SK-N-SH (cell line): ENCODE measurements at regions of chr6 and their contacts with region 1.

Region 1: DNA sequence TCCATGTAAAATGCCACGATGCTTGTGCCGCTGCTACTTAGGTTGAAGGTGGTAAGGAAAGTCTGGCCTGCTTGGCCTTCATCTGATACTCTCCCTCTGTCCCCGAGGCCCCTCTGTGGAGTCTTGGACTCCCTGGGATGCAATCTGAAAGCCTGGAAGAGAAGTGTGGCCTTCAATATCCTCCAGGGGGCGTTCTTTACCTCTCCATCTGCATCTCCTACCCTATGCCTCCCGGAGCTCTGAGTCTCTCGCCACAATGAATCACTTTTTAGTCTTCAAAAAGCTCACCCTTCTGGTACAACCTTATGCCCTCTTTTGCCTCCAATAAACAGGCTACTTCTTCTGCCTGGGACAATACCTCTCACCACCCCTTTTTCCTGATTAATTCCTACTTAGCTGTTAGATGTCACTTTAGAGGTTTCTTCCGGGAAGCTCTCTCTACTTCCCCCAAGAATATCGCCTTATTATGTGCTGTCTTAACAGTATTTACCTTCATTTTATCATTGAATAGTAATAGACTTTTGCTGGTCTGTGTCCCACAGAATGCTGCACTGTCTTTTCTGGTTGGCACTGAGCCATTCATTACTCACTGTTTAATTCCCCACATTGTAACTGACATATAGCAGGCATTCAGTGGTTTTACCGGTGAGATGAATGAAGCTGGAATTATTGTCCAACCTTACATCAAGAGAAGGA is 13.9 kb upstream of the ATG5 start:
- DNase-seq: peak; percentile 75
- H3K4me3 ChIP-seq: peak overlapping the region; percentile 16 to 27; a peak in 3 of 4 replicates
- H3K27ac ChIP-seq: peak overlapping the region in 1 of 2 experiments; percentile 35; a peak in 1 of 4 replicates
- H3K4me1 ChIP-seq: peaks cover 0 to 2% of the 10 kb centered on the region in 2 experiments; a peak in 2 of 4 replicates
- H3K27me3 ChIP-seq: no peaks in the 10 kb centered on the region
- CTCF ChIP-seq: peak; percentile 90
- EP300 ChIP-seq: no peak
- RAD21 ChIP-seq: peak; percentile 75

Region 2: DNA sequence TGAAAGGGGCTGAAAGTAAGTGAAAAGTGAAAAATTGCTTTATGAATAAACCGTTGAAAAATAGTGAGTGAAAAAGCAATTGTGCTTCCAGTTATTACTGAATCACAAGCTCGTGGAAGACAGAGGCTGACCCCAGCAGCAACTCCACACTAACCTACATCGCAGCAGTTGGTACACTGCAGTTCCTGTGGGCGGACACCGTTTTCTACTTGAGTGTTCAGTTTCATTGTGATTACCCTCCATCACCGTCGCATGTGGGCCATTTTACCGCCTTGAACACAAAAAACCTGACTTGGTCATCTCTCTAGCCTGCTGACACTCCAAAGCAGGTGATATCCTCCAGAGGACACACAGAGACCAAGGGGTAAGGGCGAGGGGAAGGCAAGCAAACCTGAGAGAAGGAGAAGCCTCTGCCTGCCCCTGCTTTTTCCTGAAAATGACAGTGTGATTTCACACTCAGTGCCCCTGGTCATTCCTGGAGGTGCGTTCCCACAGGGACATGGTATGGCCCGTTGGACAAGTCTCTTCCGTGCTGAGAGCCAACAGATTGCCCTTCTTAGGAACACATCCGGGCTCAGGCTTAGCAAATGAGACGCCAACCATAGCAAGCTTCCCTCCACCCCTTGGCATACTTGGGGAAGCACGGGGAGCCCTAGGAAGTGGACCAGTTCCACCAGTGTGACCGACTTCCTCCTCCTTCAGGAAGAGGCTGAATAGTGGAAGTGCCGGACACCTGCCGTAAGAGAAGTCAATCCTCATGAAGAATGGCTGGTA is 224.8 kb before region 1 on chr6:
- CTCF ChIA-PET with region 1: no interaction called
- POLR2A ChIA-PET with region 1: no interaction called
- DNase-seq: no peak
- H3K4me3 ChIP-seq: no peak overlapping the region
- H3K27ac ChIP-seq: no peak overlapping the region
- H3K4me1 ChIP-seq: peaks cover 0 to 19% of the 10 kb centered on the region in 2 experiments; a peak in 2 of 4 replicates
- H3K27me3 ChIP-seq: no peaks in the 10 kb centered on the region
- CTCF ChIP-seq: no peak
- EP300 ChIP-seq: no peak
- RAD21 ChIP-seq: no peak

Region 3: GRCh38 chr6:106325336-106326178 is 13.9 kb before region 1 on chr6 and contains the start of gene ATG5:
- CTCF ChIA-PET with region 1: interaction called, 14 read pairs
- POLR2A ChIA-PET with region 1: interaction called, 5 read pairs
- DNase-seq: peak; percentile 98
- H3K4me3 ChIP-seq: peak within 1 kb of the TSS; percentile 93 to 94
- H3K27ac ChIP-seq: peak within 1 kb of the TSS; percentile 92 to 94
- H3K4me1 ChIP-seq: peaks cover 0 to 9% of the 10 kb centered on the region in 2 experiments; a peak in 2 of 4 replicates
- H3K27me3 ChIP-seq: no peaks in the 10 kb centered on the region
- CTCF ChIP-seq: no peak
- EP300 ChIP-seq: peak in 1 of 2 experiments; percentile 9; a peak in 1 of 4 replicates
- RAD21 ChIP-seq: no peak
- polyA plus RNA-seq, gene ATG5: 15.5 and 16.7 TPM in 2 replicates

Region 4: DNA sequence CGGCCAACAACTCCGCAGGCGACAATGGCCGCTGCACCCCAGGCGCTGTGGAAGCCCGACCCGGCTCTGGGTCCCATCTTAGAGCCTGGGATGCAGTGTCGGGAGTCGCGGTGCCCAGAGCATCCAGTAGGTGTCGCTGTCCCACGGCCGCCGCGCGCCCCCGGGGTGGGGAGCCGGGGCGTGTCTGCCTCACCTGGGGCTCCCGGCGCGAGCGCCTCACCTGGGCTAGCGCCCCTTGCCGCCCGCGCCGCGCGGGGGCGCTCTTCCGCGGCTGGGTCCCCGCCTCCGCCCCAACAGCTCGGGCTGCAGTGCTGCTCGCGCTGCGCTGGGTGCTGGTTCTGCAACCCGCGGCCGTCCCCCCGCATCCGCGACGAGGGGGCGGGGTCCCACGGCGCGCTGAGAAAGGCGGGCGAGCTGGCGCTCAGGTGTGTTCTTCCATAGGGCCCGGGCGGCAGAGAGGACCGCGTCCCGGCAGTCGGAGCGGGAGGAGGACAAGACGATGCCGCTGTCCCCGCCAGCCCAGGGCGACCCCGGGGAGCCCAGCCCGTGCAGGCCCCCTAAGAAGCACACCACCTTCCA is 21.0 kb after region 1 on chr6 and contains the start of gene CRYBG1:
- CTCF ChIA-PET with region 1: interaction called, 16 read pairs
- POLR2A ChIA-PET with region 1: no interaction called
- DNase-seq: peak; percentile 92
- H3K4me3 ChIP-seq: peak within 1 kb of the TSS; percentile 54 to 65
- H3K27ac ChIP-seq: no peak within 1 kb of the TSS
- H3K4me1 ChIP-seq: peaks cover 0 to 12% of the 10 kb centered on the region in 2 experiments; a peak in 1 of 4 replicates
- H3K27me3 ChIP-seq: peaks cover 21% of the 10 kb centered on the region; the same call in 1 of the 2 replicates
- CTCF ChIP-seq: peak; percentile 88
- EP300 ChIP-seq: no peak
- RAD21 ChIP-seq: peak; percentile 22; the same call in 1 of the 2 replicates
- polyA plus RNA-seq, gene CRYBG1: 13.8 and 14.9 TPM in 2 replicates

Region 5: GRCh38 chr6:106372838-106373501 is 33.5 kb after region 1 on chr6:
- CTCF ChIA-PET with region 1: interaction called, 12 read pairs
- POLR2A ChIA-PET with region 1: no interaction called
- DNase-seq: no peak
- H3K4me3 ChIP-seq: no peak overlapping the region
- H3K27ac ChIP-seq: no peak overlapping the region
- H3K4me1 ChIP-seq: peaks cover 2 to 3% of the 10 kb centered on the region in 2 experiments; a peak in 2 of 4 replicates
- H3K27me3 ChIP-seq: no peaks in the 10 kb centered on the region
- CTCF ChIP-seq: no peak
- EP300 ChIP-seq: no peak
- RAD21 ChIP-seq: no peak

Region 6: GRCh38 chr6:106560996-106561685 is 221.7 kb after region 1 on chr6:
- CTCF ChIA-PET with region 1: interaction called, 19 read pairs
- POLR2A ChIA-PET with region 1: no interaction called
- DNase-seq: no peak
- H3K4me3 ChIP-seq: no peak overlapping the region
- H3K27ac ChIP-seq: peak overlapping the region in 1 of 2 experiments; percentile 52; a peak in 1 of 4 replicates
- H3K4me1 ChIP-seq: peaks cover 0 to 5% of the 10 kb centered on the region in 2 experiments; a peak in 1 of 4 replicates
- H3K27me3 ChIP-seq: no peaks in the 10 kb centered on the region
- CTCF ChIP-seq: no peak
- EP300 ChIP-seq: no peak
- RAD21 ChIP-seq: no peak

Region 7: DNA sequence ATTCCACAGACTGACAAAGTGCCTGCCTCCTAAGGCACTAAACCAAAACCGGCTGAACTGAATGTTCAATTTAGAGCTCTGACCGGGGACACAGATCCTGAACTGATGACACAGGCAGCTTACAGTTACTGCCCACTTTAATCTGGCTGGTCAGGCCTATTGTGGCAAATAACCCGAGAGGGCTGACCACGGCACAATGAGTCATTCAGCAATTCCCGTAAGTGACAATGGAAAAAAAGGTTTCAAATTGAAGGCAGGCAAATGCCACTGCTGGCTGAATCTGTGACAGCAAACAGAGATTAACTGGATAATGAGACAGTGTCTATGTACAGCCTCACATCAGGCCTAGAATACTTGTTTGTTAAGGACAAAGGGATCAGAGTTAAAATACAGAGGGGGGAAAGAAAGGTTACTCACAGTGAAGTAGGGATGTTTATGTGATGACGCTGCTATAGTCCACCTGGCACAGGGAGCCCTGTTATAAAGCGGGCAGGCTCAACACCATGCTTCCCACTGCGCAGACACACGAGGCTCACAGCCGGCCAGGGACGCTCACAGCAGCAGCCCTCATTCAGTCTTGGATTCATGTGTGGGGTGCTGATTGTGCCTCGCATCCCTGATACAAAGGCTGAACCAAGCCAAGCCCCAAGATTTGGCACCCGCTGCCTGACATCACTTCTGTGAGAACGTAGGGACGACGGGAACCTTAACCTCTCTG is 235.4 kb after region 1 on chr6:
- CTCF ChIA-PET with region 1: interaction called, 17 read pairs
- POLR2A ChIA-PET with region 1: no interaction called
- DNase-seq: no peak
- H3K4me3 ChIP-seq: no peak overlapping the region
- H3K27ac ChIP-seq: peak overlapping the region; percentile 14 to 35; a peak in 2 of 4 replicates
- H3K4me1 ChIP-seq: no peaks in the 10 kb centered on the region
- H3K27me3 ChIP-seq: no peaks in the 10 kb centered on the region
- CTCF ChIP-seq: no peak
- EP300 ChIP-seq: peak in 1 of 2 experiments; percentile 51; a peak in 1 of 4 replicates
- RAD21 ChIP-seq: no peak

Region 8: DNA sequence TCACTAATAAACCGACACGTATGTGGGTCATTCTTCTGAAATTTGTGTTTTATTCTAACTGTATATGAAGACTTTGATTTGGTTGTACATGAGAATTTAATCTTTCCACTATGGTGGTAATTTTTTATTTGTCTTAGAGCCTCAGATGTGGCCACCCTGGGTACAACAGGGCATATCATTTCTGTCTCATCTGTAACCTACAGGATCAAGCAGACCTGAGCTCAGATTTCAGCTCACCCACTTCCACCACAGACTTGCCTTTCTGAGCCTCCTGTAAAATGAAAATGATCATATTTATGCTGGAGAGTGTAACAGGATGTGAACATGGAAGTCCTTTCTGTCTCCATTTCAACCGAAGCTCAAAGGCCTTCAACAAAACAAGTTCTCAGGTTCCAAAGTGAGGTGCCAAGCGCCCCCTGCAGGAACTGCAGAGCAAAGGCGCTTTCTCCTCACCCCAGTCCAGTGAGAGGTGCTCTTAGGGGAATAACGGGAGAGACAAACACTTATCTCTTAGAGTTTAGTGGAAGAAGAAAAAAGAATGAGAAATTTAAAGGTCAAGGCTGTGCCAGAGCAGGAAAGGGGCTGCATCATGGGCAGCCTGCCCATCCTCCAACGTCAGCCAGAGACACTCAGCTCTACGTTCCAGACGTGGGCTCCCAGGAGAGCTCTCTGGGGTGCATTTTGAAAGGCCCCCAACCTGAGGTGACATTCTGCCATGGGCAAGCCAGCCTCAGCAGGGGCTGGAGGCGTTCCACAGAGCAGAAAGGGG is 658.1 kb after region 1 on chr6:
- CTCF ChIA-PET with region 1: interaction called, 11 read pairs
- POLR2A ChIA-PET with region 1: no interaction called
- DNase-seq: peak; percentile 66
- H3K4me3 ChIP-seq: no peak overlapping the region; a peak in 1 of 4 replicates
- H3K27ac ChIP-seq: no peak overlapping the region
- H3K4me1 ChIP-seq: no peaks in the 10 kb centered on the region
- H3K27me3 ChIP-seq: no peaks in the 10 kb centered on the region
- CTCF ChIP-seq: peak; percentile 87
- EP300 ChIP-seq: no peak
- RAD21 ChIP-seq: peak; percentile 73